ENCODE measurements at regions of chr14 and their contacts with region 1.

Region 1: DNA sequence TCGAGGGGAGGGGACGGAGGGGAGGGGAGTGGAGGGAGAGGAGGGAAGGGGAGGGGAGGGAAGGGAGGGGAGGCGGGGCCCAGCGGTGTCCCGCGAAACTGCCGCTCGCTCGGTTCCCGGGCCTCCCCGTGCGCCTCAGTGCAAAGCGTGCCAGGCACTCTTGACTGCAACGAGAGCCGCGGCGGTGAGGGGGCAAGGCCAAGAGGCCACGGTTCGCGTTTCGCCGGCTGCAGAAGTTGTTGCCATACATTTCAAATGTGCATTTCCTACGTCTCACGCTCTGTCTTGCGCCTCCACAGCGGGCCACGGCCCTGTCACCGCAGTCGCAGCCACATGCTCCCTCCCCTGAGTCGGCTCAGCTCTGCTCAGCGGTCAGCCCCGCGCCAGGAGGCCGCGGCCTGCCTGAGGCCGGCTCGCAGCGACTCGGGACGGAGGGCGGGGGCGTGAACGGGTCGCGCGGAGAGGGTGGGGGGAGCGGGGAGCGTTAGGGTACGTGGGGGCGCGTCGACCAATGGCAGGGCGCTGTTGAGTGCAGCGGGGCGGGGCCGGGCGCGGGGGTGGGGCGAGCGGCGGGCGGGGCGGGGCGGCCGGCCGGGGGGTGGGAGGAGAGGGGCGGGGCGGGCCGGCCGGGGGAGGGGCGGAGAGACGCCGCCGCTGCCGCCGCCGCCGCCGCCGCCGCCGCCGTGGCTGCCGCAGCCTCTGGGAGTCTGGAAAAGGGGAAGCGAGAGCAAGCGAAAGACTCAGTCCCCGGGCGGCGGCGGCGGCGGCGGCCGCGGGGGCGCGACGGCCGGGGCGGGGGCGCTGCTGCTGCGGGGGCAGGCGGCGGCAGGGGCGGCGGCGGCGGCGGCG is at the start of gene PPP2R5C:
- DNase-seq: peak; percentile 74 to 94 (median 87)
- ATAC-seq: peak; percentile 61
- H3K4me3 ChIP-seq: peak within 1 kb of the TSS; percentile 97 to 98
- H3K4me3 Mint-ChIP-seq: peak within 1 kb of the TSS; percentile 95
- H3K27ac ChIP-seq: peak within 1 kb of the TSS; percentile 90 to 93
- H3K27ac Mint-ChIP-seq: peak within 1 kb of the TSS; percentile 94
- H3K4me1 ChIP-seq: peaks cover 25% of the 10 kb centered on the region
- H3K4me1 Mint-ChIP-seq: peaks cover 41% of the 10 kb centered on the region
- H3K27me3 ChIP-seq: no peaks in the 10 kb centered on the region
- H3K27me3 Mint-ChIP-seq: no peaks in the 10 kb centered on the region
- CTCF ChIP-seq: no peak
- total RNA-seq, gene PPP2R5C: 557 to 560 TPM

Region 2: DNA sequence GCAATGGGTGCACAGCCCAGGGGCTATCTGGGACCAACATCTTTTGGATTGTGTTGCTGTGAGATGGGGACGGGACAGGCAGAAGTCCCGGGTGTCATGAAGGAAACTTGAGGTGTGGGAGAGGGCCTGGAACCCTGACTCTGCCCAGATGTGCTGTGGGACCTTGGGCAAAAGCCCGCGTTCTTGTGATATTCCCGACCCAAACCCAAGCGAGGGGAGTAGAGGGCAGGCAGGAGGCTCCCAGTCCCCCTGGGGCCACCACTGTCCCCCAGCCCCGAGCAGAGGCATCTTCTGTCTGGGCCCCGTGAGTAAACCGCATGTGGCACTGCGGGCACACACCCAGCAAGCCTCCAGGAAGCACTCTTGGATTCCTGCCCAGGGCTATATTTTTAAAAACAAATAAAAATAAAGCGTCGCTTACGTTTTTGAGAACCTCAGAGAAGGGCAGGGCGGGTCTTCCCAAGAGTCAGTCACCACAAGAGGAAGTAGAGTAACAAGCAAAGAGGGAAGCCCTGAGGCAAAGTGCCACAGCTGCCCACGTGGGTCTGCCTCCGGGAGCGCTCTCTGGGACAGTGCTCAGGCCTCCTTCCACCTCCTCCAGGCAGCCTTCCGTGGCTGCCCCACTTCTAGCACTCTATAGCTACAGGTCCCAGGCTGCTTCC is 1213.5 kb before region 1 on chr14:
- CTCF ChIA-PET with region 1: no interaction called
- POLR2A ChIA-PET with region 1: no interaction called
- intact Hi-C with region 1: loop called in 1 of 2 experiments (anchors 5 kb)
- DNase-seq: peak; percentile 8 to 91 (median 51)
- ATAC-seq: peak; percentile 52
- H3K4me3 ChIP-seq: peak overlapping the region in 1 of 2 experiments; percentile 68
- H3K4me3 Mint-ChIP-seq: peak overlapping the region; percentile 57
- H3K27ac ChIP-seq: peak overlapping the region; percentile 64 to 67
- H3K27ac Mint-ChIP-seq: peak overlapping the region; percentile 88
- H3K4me1 ChIP-seq: peaks cover 36% of the 10 kb centered on the region
- H3K4me1 Mint-ChIP-seq: peaks cover 24% of the 10 kb centered on the region
- H3K27me3 ChIP-seq: no peaks in the 10 kb centered on the region
- H3K27me3 Mint-ChIP-seq: no peaks in the 10 kb centered on the region
- CTCF ChIP-seq: no peak

Region 3: GRCh38 chr14:101731187-101732080 is 29.8 kb before region 1 on chr14:
- CTCF ChIA-PET with region 1: interaction called, 6 read pairs
- POLR2A ChIA-PET with region 1: interaction called, 5 read pairs
- intact Hi-C with region 1: loop called (anchors 1 kb)
- DNase-seq: peak; percentile 50 to 96 (median 80)
- ATAC-seq: peak; percentile 87
- H3K4me3 ChIP-seq: peak overlapping the region; percentile 24 to 28
- H3K4me3 Mint-ChIP-seq: peak overlapping the region; percentile 76
- H3K27ac ChIP-seq: peak overlapping the region; percentile 76 to 83
- H3K27ac Mint-ChIP-seq: peak overlapping the region; percentile 97
- H3K4me1 ChIP-seq: peaks cover 23% of the 10 kb centered on the region
- H3K4me1 Mint-ChIP-seq: peaks cover 44% of the 10 kb centered on the region
- H3K27me3 ChIP-seq: no peaks in the 10 kb centered on the region
- H3K27me3 Mint-ChIP-seq: no peaks in the 10 kb centered on the region
- CTCF ChIP-seq: no peak

Region 4: GRCh38 chr14:101876555-101876938 is 115.3 kb after region 1 on chr14:
- CTCF ChIA-PET with region 1: no interaction called
- POLR2A ChIA-PET with region 1: interaction called, 4 read pairs
- intact Hi-C with region 1: loop called in 1 of 2 experiments (anchors 5 kb)
- DNase-seq: peak; percentile 38 to 93 (median 65)
- ATAC-seq: peak; percentile 85
- H3K4me3 ChIP-seq: peak overlapping the region; percentile 13 to 23
- H3K4me3 Mint-ChIP-seq: peak overlapping the region; percentile 78
- H3K27ac ChIP-seq: peak overlapping the region; percentile 45 to 86
- H3K27ac Mint-ChIP-seq: peak overlapping the region; percentile 97
- H3K4me1 ChIP-seq: peaks cover 58% of the 10 kb centered on the region
- H3K4me1 Mint-ChIP-seq: peaks cover 81% of the 10 kb centered on the region
- H3K27me3 ChIP-seq: no peaks in the 10 kb centered on the region
- H3K27me3 Mint-ChIP-seq: no peaks in the 10 kb centered on the region
- CTCF ChIP-seq: no peak

Region 5: GRCh38 chr14:102086972-102087761 is 325.9 kb after region 1 on chr14 and contains the start of gene HSP90AA1:
- CTCF ChIA-PET with region 1: no interaction called
- POLR2A ChIA-PET with region 1: no interaction called
- intact Hi-C with region 1: loop called in 1 of 2 experiments (anchors 1 kb)
- DNase-seq: peak; percentile 88 to 98 (median 95)
- ATAC-seq: peak; percentile 74
- H3K4me3 ChIP-seq: peak within 1 kb of the TSS; percentile 75 to 78
- H3K4me3 Mint-ChIP-seq: peak within 1 kb of the TSS; percentile 97
- H3K27ac ChIP-seq: peak within 1 kb of the TSS; percentile 96 to 97
- H3K27ac Mint-ChIP-seq: peak within 1 kb of the TSS; percentile 99
- H3K4me1 ChIP-seq: peaks cover 49% of the 10 kb centered on the region
- H3K4me1 Mint-ChIP-seq: peaks cover 58% of the 10 kb centered on the region
- H3K27me3 ChIP-seq: no peaks in the 10 kb centered on the region
- H3K27me3 Mint-ChIP-seq: no peaks in the 10 kb centered on the region
- CTCF ChIP-seq: no peak
- total RNA-seq, gene HSP90AA1: 532 to 539 TPM

Region 6: GRCh38 chr14:102304611-102305509 is 543.6 kb after region 1 on chr14 and contains the start of gene MOK:
- CTCF ChIA-PET with region 1: no interaction called
- POLR2A ChIA-PET with region 1: no interaction called
- intact Hi-C with region 1: loop called in 1 of 2 experiments (anchors 2 kb)
- DNase-seq: peak; percentile 94 to 99 (median 98)
- ATAC-seq: peak; percentile 92
- H3K4me3 ChIP-seq: peak within 1 kb of the TSS; percentile 83 to 97
- H3K4me3 Mint-ChIP-seq: peak within 1 kb of the TSS; percentile 91
- H3K27ac ChIP-seq: peak within 1 kb of the TSS; percentile 84 to 88
- H3K27ac Mint-ChIP-seq: peak within 1 kb of the TSS; percentile 94
- H3K4me1 ChIP-seq: peaks cover 5% of the 10 kb centered on the region
- H3K4me1 Mint-ChIP-seq: peaks cover 10% of the 10 kb centered on the region
- H3K27me3 ChIP-seq: no peaks in the 10 kb centered on the region
- H3K27me3 Mint-ChIP-seq: peaks cover 2% of the 10 kb centered on the region
- CTCF ChIP-seq: no peak
- total RNA-seq, gene MOK: 2.7 to 3.6 TPM

Region 7: DNA sequence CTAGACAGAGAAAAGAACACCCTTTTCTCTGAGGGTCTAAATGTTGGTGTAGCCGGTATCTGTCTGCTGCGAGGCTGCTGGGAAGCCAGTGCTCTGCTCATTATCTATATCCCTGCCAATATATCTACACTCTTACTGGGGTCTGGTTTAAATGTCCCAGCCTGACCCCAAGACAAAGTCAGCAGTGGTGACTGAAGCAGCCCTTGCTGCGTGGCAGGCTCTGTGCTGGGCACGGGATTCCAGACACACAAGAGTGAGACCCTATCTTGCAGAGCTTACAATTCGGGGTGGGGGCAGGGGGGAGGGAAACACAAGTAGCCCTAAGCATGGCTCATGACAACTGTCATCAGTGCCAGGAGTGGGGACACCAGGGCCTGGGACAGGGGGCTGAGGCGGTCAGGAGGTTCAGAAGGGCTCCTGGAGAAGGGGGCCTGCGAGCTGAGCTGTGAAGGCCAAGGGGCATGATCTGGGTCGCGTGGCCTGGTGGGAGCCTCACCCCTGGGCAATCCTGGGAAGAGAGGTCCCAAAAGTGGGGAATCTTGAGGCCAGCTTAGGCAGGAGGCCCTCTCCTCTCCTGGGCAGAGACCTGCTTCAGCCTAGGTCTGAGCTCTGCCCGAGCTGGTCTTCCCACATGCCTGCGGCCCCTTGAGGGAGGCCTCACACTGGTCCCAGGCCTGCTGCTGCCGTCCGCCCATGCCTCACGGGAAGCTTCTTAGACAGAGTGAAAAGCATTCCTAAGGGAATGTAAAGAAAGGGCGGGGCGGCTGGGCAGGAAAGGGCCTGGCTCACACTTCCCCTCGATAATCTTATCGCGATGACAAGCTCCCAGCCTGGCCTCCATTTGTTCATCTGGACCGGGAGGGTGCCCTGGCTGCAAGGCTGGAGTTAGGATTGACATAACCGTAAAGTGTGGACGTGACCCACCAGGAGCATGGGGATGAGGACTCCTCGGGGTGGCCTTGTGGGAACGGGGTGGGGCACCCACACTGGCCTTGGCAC is 823.9 kb after region 1 on chr14:
- CTCF ChIA-PET with region 1: no interaction called
- POLR2A ChIA-PET with region 1: no interaction called
- intact Hi-C with region 1: loop called in 1 of 2 experiments (anchors 5 kb)
- DNase-seq: no peak
- ATAC-seq: no peak
- H3K4me3 ChIP-seq: no peak overlapping the region
- H3K4me3 Mint-ChIP-seq: no peak overlapping the region
- H3K27ac ChIP-seq: no peak overlapping the region
- H3K27ac Mint-ChIP-seq: no peak overlapping the region
- H3K4me1 ChIP-seq: no peaks in the 10 kb centered on the region
- H3K4me1 Mint-ChIP-seq: no peaks in the 10 kb centered on the region
- H3K27me3 ChIP-seq: no peaks in the 10 kb centered on the region
- H3K27me3 Mint-ChIP-seq: no peaks in the 10 kb centered on the region
- CTCF ChIP-seq: no peak

Measured in CD8-positive, alpha-beta T cell (primary cell).